Tibial artery (tissue), 4 donors: ENCODE measurements at regions of chr2 and their contacts with region 1.

Region 1: GRCh38 chr2:46469116-46469515 is 10.2 kb upstream of the TMEM247 start:
- DNase-seq: no peak
- H3K4me3 ChIP-seq: no peak overlapping the region
- H3K27ac ChIP-seq: no peak overlapping the region
- H3K4me1 ChIP-seq: no peaks in the 10 kb centered on the region
- H3K27me3 ChIP-seq: no peaks in the 10 kb centered on the region
- CTCF ChIP-seq: no peak

Region 2: DNA sequence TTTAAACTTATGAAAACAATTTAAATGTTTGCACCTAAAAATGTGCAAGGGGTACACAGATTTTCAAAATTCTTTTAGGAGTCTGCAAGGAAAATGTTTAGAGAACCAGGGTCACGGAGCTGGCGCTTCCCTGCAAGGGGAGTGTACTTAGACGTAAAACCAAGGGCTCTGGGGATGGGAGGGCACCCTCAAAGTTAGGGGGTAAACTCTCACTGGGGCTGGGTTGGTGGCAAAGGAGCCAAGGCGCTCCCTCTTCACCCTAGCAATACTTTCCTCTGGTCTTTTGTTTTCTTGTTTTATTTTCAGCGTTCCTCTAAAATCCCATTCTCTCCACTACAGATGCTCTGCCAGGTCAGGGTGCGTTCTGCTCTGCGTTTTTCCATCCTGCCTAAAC is 30.3 kb after region 1 on chr2:
- intact Hi-C with region 1: no loop called
- DNase-seq: no peak
- H3K4me3 ChIP-seq: peak overlapping the region; percentile 56 to 60
- H3K27ac ChIP-seq: peak overlapping the region; percentile 80 to 82
- H3K4me1 ChIP-seq: peaks cover 0 to 10% (median 5%) of the 10 kb centered on the region in 4 donors
- H3K27me3 ChIP-seq: no peaks in the 10 kb centered on the region
- CTCF ChIP-seq: no peak

Region 3: GRCh38 chr2:46893269-46893945 is 424.3 kb after region 1 on chr2:
- intact Hi-C with region 1: loop called (anchors 5 kb)
- DNase-seq: no peak
- H3K4me3 ChIP-seq: no peak overlapping the region
- H3K27ac ChIP-seq: no peak overlapping the region
- H3K4me1 ChIP-seq: peaks cover 0 to 4% (median 1%) of the 10 kb centered on the region in 4 donors
- H3K27me3 ChIP-seq: no peaks in the 10 kb centered on the region
- CTCF ChIP-seq: no peak

Region 4: DNA sequence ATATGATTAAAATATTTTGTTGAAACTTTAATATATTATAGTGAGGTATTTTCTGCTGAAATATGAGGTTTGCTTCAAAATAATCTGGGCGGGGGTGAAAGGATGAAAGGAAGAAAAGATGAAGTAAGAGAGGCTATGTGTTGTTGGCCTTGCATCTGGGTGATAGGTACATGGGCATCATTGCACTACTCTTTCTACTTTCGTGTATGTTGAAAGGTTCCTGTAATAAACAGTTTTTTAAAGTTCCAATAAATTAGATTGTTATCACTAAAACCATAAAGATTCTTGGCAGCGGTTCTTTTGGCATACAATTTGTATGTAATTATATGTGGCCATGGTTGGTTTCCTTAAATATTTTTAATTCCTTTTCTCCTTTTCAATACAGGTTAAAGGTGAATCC is 910.3 kb after region 1 on chr2:
- intact Hi-C with region 1: no loop called
- DNase-seq: no peak
- H3K4me3 ChIP-seq: no peak overlapping the region
- H3K27ac ChIP-seq: no peak overlapping the region
- H3K4me1 ChIP-seq: no peaks in the 10 kb centered on the region
- H3K27me3 ChIP-seq: peaks cover 0 to 12% of the 10 kb centered on the region in 2 donors
- CTCF ChIP-seq: no peak